ENCODE measurements at regions of chr4 and their contacts with region 1.

Region 1: GRCh38 chr4:151555151-151555945 is 146.4 kb downstream of the FHIP1A start:
- DNase-seq: no peak
- ATAC-seq: no peak
- H3K4me3 ChIP-seq: no peak overlapping the region
- H3K27ac ChIP-seq: no peak overlapping the region
- H3K4me1 ChIP-seq: no peaks in the 10 kb centered on the region
- H3K27me3 ChIP-seq: no peaks in the 10 kb centered on the region
- CTCF ChIP-seq: no peak

Region 2: DNA sequence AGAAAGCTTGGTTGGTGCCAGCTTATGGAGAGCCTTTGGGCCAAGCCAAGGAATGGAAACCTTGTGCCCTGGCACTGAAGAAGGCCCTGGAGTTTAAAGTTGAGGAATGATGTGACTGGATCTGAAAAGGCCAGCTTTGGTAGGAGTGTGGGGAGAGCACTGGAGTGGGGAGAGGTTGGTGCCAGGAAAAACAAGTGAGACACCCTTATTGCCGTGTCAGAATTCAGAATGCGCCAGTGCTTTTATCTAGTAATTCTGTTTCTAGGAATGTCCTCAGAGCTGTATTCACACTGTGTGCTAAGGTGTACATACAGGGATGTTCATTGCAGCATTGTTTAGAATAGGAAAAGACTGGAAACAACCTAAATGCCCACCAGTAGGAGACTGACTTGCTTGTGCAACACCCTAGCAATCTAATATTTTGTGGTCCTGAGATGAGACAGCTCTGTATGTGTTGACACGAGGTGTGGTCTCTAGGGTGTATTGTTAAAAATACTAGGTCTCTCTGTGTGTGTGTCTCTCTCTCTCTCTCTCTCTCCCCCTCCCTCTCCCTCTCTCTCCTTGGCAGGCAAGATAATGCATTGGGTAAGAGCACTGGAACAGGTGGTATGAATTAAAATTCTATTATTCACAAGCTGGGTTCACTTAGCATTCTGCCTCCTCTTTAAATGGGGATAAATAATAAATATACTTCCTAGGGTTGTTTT is 97.6 kb after region 1 on chr4:
- intact Hi-C with region 1: loop called in 1 of 10 experiments (anchors 5 kb)
- DNase-seq: no peak
- ATAC-seq: peak in 7 of 8 donors; percentile 45 to 77 (median 58)
- H3K4me3 ChIP-seq: no peak overlapping the region
- H3K27ac ChIP-seq: no peak overlapping the region
- H3K4me1 ChIP-seq: peaks cover 0 to 10% (median 0%) of the 10 kb centered on the region in 9 donors
- H3K27me3 ChIP-seq: no peaks in the 10 kb centered on the region
- CTCF ChIP-seq: no peak